ENCODE measurements at regions of chr9 and their contacts with region 1.

Region 1: DNA sequence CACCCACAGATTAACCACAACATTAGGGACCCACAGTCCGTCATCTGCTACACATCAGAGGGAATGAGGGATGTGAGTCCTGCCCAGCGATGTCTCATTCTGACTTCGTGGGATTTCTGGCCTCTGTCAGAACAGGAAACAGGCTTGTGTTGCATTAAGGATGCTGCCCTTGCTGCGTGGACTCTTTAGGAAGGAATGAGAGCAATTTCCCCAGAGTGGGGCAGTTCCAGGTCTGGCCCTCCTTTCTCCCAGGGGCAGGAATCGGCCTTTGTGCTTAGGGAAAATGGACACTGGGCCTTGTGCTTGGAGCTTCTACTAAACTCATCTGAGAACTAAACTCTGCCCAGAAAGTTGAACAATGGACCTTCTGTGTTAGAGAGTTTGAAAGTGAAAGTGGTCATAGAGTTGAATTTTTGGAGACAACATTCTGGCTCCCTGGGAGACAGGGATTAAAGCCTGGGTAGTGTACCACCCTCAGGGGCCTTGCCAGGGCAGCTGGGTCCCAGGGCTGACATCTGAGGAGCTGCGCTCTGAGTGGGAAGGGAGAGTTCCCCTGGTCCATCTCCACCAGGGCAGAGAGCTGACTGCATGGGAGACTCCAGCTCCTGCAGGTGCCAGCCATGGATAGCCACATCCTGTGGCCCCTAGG is 37.8 kb upstream of the S1PR3 start:
- DNase-seq: no peak
- ATAC-seq: no peak
- H3K4me3 ChIP-seq: no peak overlapping the region
- H3K27ac ChIP-seq: no peak overlapping the region
- H3K4me1 ChIP-seq: no peaks in the 10 kb centered on the region
- H3K27me3 ChIP-seq: no peaks in the 10 kb centered on the region
- CTCF ChIP-seq: no peak
- EP300 ChIP-seq: no peak
- POLR2A ChIP-seq: no peak
- RAD21 ChIP-seq: no peak

Region 2: GRCh38 chr9:88528080-88528790 is 425.3 kb before region 1 on chr9:
- CTCF ChIA-PET with region 1: no interaction called
- POLR2A ChIA-PET with region 1: no interaction called
- RAD21 ChIA-PET with region 1: no interaction called
- SMC1A ChIA-PET with region 1: no interaction called
- in situ Hi-C with region 1: no loop called
- intact Hi-C with region 1: loop called (anchors 2 kb)
- DNase-seq: no peak
- ATAC-seq: no peak
- H3K4me3 ChIP-seq: no peak overlapping the region
- H3K27ac ChIP-seq: no peak overlapping the region
- H3K4me1 ChIP-seq: no peaks in the 10 kb centered on the region
- H3K27me3 ChIP-seq: no peaks in the 10 kb centered on the region; a peak in 1 of 4 replicates
- CTCF ChIP-seq: no peak
- EP300 ChIP-seq: no peak
- POLR2A ChIP-seq: no peak
- RAD21 ChIP-seq: no peak

Region 3: DNA sequence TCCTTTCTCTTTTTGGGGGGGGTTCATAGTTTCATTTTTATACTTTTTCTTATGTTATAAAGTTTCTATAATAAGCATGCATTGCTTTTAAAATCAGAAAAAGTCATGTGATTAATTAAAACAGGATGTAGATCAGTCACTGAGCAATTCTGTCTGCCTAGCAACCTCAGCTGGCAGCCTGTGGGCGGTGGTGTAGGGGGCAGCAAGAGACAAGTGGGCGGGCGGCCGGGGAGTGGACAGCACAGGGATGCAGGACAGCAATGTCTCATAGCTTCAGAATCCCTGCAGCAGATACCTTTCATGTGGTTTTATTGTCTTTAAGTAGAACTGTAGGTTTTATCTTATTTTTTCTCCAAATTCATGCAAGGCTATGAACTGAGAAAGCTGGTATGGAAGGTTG is 64.1 kb before region 1 on chr9:
- CTCF ChIA-PET with region 1: no interaction called
- POLR2A ChIA-PET with region 1: no interaction called
- RAD21 ChIA-PET with region 1: no interaction called
- SMC1A ChIA-PET with region 1: no interaction called
- in situ Hi-C with region 1: no loop called
- intact Hi-C with region 1: no loop called
- DNase-seq: no peak
- ATAC-seq: no peak
- H3K4me3 ChIP-seq: no peak overlapping the region
- H3K27ac ChIP-seq: no peak overlapping the region
- H3K4me1 ChIP-seq: no peaks in the 10 kb centered on the region
- H3K27me3 ChIP-seq: no peaks in the 10 kb centered on the region
- CTCF ChIP-seq: no peak
- EP300 ChIP-seq: no peak
- POLR2A ChIP-seq: no peak
- RAD21 ChIP-seq: no peak

Measured in GM12878 (cell line).